Activated T-helper 1 cell treated with anti-CD3 and anti-CD28 coated beads, Interleukin-12 subunit alpha, Interleukin-12 subunit beta, Interleukin-2, Interleukin-4 antibody, amounts not matched to agents 30 ng/mL and 10 ng/mL and 1 ng/mL, durations not matched to agents 14 hours and 24 hours and 36 hours (primary cell): ENCODE measurements at regions of chr3 and their contacts with region 1.

Region 1: GRCh38 chr3:143060906-143061305 is 58.7 kb upstream of the CHST2 start:
- DNase-seq: no peak
- H3K4me3 Mint-ChIP-seq: no peak overlapping the region
- H3K27ac Mint-ChIP-seq: peak overlapping the region; percentile 66
- H3K4me1 Mint-ChIP-seq: peaks cover 22% of the 10 kb centered on the region
- H3K27me3 Mint-ChIP-seq: no peaks in the 10 kb centered on the region

Region 2: GRCh38 chr3:143010024-143010423 is 50.9 kb before region 1 on chr3:
- intact Hi-C with region 1: loop called (anchors 2 kb)
- DNase-seq: no peak
- H3K4me3 Mint-ChIP-seq: no peak overlapping the region
- H3K27ac Mint-ChIP-seq: peak overlapping the region; percentile 10
- H3K4me1 Mint-ChIP-seq: peaks cover 82% of the 10 kb centered on the region
- H3K27me3 Mint-ChIP-seq: no peaks in the 10 kb centered on the region

Region 3: GRCh38 chr3:143081844-143082778 is 21.2 kb after region 1 on chr3:
- intact Hi-C with region 1: loop called (anchors 1 kb)
- DNase-seq: no peak
- H3K4me3 Mint-ChIP-seq: peak overlapping the region; percentile 22
- H3K27ac Mint-ChIP-seq: peak overlapping the region; percentile 55
- H3K4me1 Mint-ChIP-seq: peaks cover 12% of the 10 kb centered on the region
- H3K27me3 Mint-ChIP-seq: peaks cover 3% of the 10 kb centered on the region

Region 4: GRCh38 chr3:143307613-143308183 is 246.8 kb after region 1 on chr3:
- intact Hi-C with region 1: loop called (anchors 5 kb)
- DNase-seq: no peak
- H3K4me3 Mint-ChIP-seq: no peak overlapping the region
- H3K27ac Mint-ChIP-seq: no peak overlapping the region
- H3K4me1 Mint-ChIP-seq: no peaks in the 10 kb centered on the region
- H3K27me3 Mint-ChIP-seq: no peaks in the 10 kb centered on the region

Region 5: GRCh38 chr3:143535994-143536784 is 475.3 kb after region 1 on chr3:
- intact Hi-C with region 1: loop called (anchors 1 kb)
- DNase-seq: no peak
- H3K4me3 Mint-ChIP-seq: no peak overlapping the region
- H3K27ac Mint-ChIP-seq: no peak overlapping the region
- H3K4me1 Mint-ChIP-seq: peaks cover 14% of the 10 kb centered on the region
- H3K27me3 Mint-ChIP-seq: peaks cover 2% of the 10 kb centered on the region

Region 6: GRCh38 chr3:144760822-144761221 is 1699.9 kb after region 1 on chr3:
- intact Hi-C with region 1: no loop called
- DNase-seq: no peak
- H3K4me3 Mint-ChIP-seq: no peak overlapping the region
- H3K27ac Mint-ChIP-seq: no peak overlapping the region
- H3K4me1 Mint-ChIP-seq: no peaks in the 10 kb centered on the region
- H3K27me3 Mint-ChIP-seq: no peaks in the 10 kb centered on the region